Right ventricle myocardium superior (tissue), 1 donor: ENCODE measurements at regions of chr12 and their contacts with region 1.

Region 1: GRCh38 chr12:64696080-64696741 is 63.0 kb downstream of the GNS start:
- DNase-seq: no peak
- ATAC-seq: peak; percentile 34

Region 2: GRCh38 chr12:64551698-64552097 is 144.5 kb before region 1 on chr12:
- intact Hi-C with region 1: loop called (anchors 2 kb)
- DNase-seq: no peak
- ATAC-seq: peak; percentile 35

Region 3: DNA sequence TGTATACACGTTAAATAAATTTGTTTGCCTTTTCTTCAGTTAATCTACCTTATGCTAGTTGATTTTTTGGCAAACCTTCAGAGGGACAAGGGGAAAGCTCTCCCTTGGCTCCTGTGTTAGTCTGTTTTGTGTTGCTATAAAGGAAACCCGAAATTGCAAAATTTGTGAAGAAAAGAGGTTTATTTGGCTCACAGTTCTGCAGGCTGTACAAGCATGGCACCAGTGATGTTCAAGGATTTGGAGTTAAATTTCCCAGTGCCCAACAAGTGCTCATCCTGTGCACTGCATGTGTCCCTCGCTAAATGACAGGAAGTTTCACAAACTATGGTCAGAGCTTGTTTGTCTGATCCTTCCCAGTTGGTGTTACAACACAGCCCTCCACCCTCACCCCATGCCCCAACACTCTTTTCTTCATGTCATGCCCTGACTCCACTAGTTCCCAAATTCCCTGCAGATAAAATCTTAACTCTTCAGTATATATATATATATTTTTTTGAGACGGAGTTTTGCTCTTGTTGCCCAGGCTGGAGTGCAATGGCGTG is 99.9 kb before region 1 on chr12:
- intact Hi-C with region 1: no loop called
- DNase-seq: no peak
- ATAC-seq: peak; percentile 69

Region 4: GRCh38 chr12:64610149-64610678 is 86.0 kb before region 1 on chr12 and contains the start of gene RASSF3:
- intact Hi-C with region 1: loop called (anchors 5 kb)
- DNase-seq: peak; percentile 88
- ATAC-seq: peak; percentile 86
- total RNA-seq, gene RASSF3: 117 TPM